ENCODE measurements at regions of chr4 and their contacts with region 1.

Region 1: DNA sequence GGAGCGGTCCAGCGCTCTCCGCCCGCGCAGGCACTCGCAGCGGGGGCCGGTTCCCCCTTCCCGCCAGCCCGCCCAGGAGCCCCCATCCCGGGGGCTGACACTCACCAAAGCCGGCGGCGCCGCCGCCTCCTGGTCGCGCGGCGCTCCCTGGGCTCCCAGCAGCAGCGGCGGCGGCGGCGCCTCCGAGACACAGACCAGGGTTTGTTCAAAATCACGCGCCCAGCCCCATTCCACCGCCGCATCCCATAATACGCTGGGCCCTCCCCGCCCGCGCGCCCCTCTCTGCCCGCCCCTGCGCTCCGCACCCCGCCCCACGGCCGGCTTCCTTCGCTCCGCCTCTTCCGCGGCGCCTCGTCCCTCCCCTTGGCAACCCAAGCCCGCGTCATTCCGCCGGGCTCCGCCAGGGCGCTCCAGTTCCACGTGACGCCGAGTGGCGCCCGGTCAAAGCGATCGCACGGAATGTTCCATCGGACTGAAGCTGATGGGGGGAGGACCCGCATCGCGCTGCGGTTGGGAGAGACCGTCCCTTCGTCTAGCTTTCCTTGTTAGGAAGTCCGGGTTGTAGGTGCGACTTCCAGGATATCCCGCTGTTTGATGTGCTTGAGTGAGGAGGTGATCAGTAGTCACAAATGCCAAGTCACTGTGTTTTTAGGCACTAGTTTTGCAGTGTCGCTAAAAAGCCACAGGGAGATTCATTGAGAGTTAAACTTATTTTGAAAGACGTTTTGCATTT is 2.2 kb upstream of the LIN54 start:
- DNase-seq: peak; percentile 93 to 99 (median 97)
- ATAC-seq: peak; percentile 94
- H3K4me3 ChIP-seq: peak overlapping the region; percentile 69
- H3K4me3 Mint-ChIP-seq: peak overlapping the region; percentile 89 to 98 (median 94)
- H3K27ac ChIP-seq: peak overlapping the region; percentile 73
- H3K27ac Mint-ChIP-seq: peak overlapping the region; percentile 84 to 98 (median 93)
- H3K4me1 ChIP-seq: peaks cover 15 to 22% of the 10 kb centered on the region in 2 donors
- H3K4me1 Mint-ChIP-seq: peaks cover 32 to 54% (median 46%) of the 10 kb centered on the region in 7 donors
- H3K27me3 ChIP-seq: no peaks in the 10 kb centered on the region
- H3K27me3 Mint-ChIP-seq: no peaks in the 10 kb centered on the region

Region 2: GRCh38 chr4:82428969-82429727 is 583.7 kb before region 1 on chr4:
- CTCF ChIA-PET with region 1: no interaction called
- POLR2A ChIA-PET with region 1: interaction called, 6 read pairs
- intact Hi-C with region 1: loop called (anchors 1 kb)
- DNase-seq: peak; percentile 90 to 99 (median 94)
- ATAC-seq: peak; percentile 79
- H3K4me3 ChIP-seq: peak overlapping the region; percentile 96
- H3K4me3 Mint-ChIP-seq: peak overlapping the region; percentile 98 to 100 (median 99)
- H3K27ac ChIP-seq: peak overlapping the region; percentile 99
- H3K27ac Mint-ChIP-seq: peak overlapping the region; percentile 98 to 100 (median 99)
- H3K4me1 ChIP-seq: peaks cover 28 to 39% of the 10 kb centered on the region in 2 donors
- H3K4me1 Mint-ChIP-seq: peaks cover 40 to 81% (median 69%) of the 10 kb centered on the region in 7 donors
- H3K27me3 ChIP-seq: no peaks in the 10 kb centered on the region
- H3K27me3 Mint-ChIP-seq: peaks cover 0 to 2% (median 0%) of the 10 kb centered on the region in 5 donors

Region 3: GRCh38 chr4:82890901-82891706 is 121.7 kb before region 1 on chr4 and contains the start of gene SEC31A:
- CTCF ChIA-PET with region 1: no interaction called
- POLR2A ChIA-PET with region 1: interaction called, 3 read pairs
- intact Hi-C with region 1: loop called (anchors 1 kb)
- DNase-seq: peak; percentile 89 to 98 (median 95)
- ATAC-seq: peak; percentile 97
- H3K4me3 ChIP-seq: peak within 1 kb of the TSS; percentile 96
- H3K4me3 Mint-ChIP-seq: peak within 1 kb of the TSS; percentile 86 to 96 (median 93)
- H3K27ac ChIP-seq: peak within 1 kb of the TSS; percentile 99
- H3K27ac Mint-ChIP-seq: peak within 1 kb of the TSS; percentile 92 to 99 (median 97)
- H3K4me1 ChIP-seq: peaks cover 11 to 12% of the 10 kb centered on the region in 2 donors
- H3K4me1 Mint-ChIP-seq: peaks cover 18 to 51% (median 41%) of the 10 kb centered on the region in 7 donors
- H3K27me3 ChIP-seq: no peaks in the 10 kb centered on the region
- H3K27me3 Mint-ChIP-seq: no peaks in the 10 kb centered on the region
- total RNA-seq, gene SEC31A: 137 to 168 (median 149) TPM

Region 4: DNA sequence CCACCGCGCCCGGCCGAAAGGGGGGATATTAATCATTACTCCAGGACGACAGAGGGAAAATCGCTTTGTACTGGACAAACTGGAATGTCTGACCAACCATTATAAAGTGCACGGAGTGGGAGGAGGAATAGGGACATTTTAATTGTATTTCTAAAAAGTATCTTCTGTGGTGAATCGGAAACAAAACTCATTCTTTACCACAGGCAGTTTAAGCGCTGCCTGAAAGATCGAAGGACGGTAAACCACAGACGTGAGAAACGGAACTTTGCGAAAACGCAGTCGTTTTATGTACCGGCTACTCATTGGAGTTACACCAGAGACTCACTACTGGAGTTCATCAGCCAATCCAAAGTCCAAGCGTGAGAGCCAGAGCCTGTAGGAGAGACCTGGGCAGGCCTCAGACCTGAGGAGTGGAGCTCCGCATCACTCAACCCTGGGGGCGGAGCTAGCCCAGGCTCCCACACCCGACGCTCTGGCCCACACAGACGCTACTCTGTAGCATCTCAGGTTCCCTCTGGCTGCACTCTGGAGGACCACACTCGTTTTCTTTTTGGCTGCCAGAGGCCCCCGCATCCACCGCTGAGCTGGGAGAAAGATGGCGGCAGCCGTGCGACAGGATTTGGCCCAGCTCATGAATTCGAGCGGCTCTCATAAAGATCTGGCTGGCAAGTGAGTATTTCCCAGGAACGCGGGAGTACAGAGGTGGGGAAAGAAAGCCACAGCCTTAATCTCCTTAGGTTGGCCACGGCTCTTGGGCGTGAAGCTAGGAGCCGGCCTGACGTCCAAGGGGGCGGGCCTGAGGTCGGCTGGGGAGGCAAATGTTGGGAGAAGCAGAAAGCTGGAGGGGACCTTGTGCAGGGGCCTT is 22.0 kb after region 1 on chr4 and contains the start of gene COPS4:
- CTCF ChIA-PET with region 1: interaction called, 11 read pairs
- POLR2A ChIA-PET with region 1: interaction called, 59 read pairs
- intact Hi-C with region 1: loop called (anchors 1 kb)
- DNase-seq: peak; percentile 77 to 98 (median 97)
- ATAC-seq: peak; percentile 99
- H3K4me3 ChIP-seq: peak within 1 kb of the TSS; percentile 98
- H3K4me3 Mint-ChIP-seq: peak within 1 kb of the TSS; percentile 92 to 100 (median 98)
- H3K27ac ChIP-seq: peak within 1 kb of the TSS; percentile 94
- H3K27ac Mint-ChIP-seq: peak within 1 kb of the TSS; percentile 94 to 100 (median 97)
- H3K4me1 ChIP-seq: peaks cover 4 to 19% of the 10 kb centered on the region in 2 donors
- H3K4me1 Mint-ChIP-seq: peaks cover 19 to 44% (median 35%) of the 10 kb centered on the region in 7 donors
- H3K27me3 ChIP-seq: no peaks in the 10 kb centered on the region
- H3K27me3 Mint-ChIP-seq: no peaks in the 10 kb centered on the region
- total RNA-seq, gene COPS4: 23.5 to 32.8 (median 24.7) TPM

Region 5: DNA sequence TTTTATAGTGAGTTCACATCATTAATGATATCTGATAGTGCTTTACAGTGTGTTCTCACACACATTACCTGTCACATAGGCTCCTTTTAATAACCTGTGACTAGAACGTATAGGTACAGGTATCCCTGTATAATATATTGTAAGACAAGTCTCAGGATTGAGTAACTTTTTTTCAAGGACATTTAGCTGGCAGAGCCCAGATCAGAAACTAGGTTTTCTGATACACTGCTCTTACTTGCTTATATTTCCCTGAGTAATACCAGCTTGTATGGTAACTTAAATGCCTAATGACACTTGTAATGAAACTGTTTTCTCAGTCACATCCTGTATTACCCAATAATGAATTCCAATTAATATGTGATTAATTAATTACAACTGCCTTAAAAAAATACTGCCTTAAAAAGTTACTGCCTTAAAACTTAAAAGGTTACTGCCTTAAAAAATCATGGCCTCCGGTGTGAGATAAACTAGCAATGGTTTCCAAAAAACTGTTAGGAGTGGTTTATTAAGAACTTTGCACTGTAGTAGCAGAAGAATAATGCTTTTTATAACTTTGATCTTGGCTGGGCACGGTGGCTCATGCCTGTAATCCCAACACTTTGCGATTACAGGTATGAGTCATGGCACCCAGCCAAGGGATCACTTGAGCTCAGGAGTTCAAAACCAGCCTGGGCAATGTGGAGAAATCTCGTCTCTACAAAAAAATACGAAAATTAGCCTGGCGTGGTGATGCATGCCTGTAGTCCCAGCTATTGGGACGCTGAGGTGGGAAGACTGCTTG is 34.0 kb after region 1 on chr4:
- CTCF ChIA-PET with region 1: no interaction called
- POLR2A ChIA-PET with region 1: no interaction called
- intact Hi-C with region 1: no loop called
- DNase-seq: no peak
- ATAC-seq: no peak
- H3K4me3 ChIP-seq: no peak overlapping the region
- H3K4me3 Mint-ChIP-seq: no peak overlapping the region
- H3K27ac ChIP-seq: no peak overlapping the region
- H3K27ac Mint-ChIP-seq: no peak overlapping the region
- H3K4me1 ChIP-seq: peaks cover 4 to 5% of the 10 kb centered on the region in 2 donors
- H3K4me1 Mint-ChIP-seq: peaks cover 4 to 23% (median 18%) of the 10 kb centered on the region in 7 donors
- H3K27me3 ChIP-seq: no peaks in the 10 kb centered on the region
- H3K27me3 Mint-ChIP-seq: no peaks in the 10 kb centered on the region

Region 6: GRCh38 chr4:83217721-83218522 is 205.1 kb after region 1 on chr4:
- CTCF ChIA-PET with region 1: no interaction called
- POLR2A ChIA-PET with region 1: interaction called, 8 read pairs
- intact Hi-C with region 1: loop called in 1 of 2 experiments (anchors 1 kb)
- DNase-seq: peak in 8 of 9 donors; percentile 52 to 91 (median 84)
- ATAC-seq: peak; percentile 95
- H3K4me3 ChIP-seq: peak overlapping the region; percentile 23
- H3K4me3 Mint-ChIP-seq: peak overlapping the region; percentile 57 to 84 (median 72)
- H3K27ac ChIP-seq: peak overlapping the region; percentile 78
- H3K27ac Mint-ChIP-seq: peak overlapping the region; percentile 88 to 96 (median 92)
- H3K4me1 ChIP-seq: peaks cover 65 to 77% of the 10 kb centered on the region in 2 donors
- H3K4me1 Mint-ChIP-seq: peaks cover 56 to 83% (median 74%) of the 10 kb centered on the region in 7 donors
- H3K27me3 ChIP-seq: no peaks in the 10 kb centered on the region
- H3K27me3 Mint-ChIP-seq: no peaks in the 10 kb centered on the region

Region 7: DNA sequence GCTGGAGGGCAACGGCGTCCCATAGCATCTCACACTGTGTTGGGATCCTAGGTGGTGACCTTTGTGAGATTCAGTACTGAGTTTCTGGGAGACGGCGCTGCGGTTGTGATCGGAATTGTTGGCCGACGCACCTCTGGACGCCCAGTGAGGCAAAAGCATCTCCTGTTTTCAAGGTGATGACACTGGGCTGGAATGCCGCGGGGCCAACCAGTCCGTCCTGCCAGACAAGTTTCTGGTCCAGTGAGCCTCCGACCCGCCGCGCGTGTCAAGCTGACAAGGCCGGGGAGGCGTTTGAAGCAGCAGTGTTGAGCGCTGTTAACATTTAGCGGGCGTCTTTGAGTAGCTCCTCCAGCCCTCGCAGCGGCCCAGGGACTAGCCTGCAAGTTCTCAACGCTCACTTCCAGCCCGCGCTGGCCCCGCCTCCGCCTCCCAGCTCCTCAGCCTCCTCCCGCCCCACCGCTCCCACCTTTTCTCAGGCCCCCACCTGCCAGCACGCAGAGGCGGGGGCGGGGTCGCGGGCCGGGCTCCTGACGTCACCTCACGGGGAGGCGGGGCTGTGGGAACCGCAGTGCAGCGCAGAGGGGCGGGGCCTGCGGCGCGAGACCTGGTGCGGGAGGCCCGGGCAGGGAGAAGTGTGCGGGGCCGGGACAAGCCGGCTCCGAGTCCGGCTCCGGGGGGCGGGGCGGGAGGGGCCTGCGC is 1569.6 kb after region 1 on chr4:
- CTCF ChIA-PET with region 1: no interaction called
- POLR2A ChIA-PET with region 1: no interaction called
- intact Hi-C with region 1: loop called in 1 of 2 experiments (anchors 2 kb)
- DNase-seq: peak; percentile 88 to 96 (median 91)
- ATAC-seq: peak; percentile 93
- H3K4me3 ChIP-seq: peak overlapping the region; percentile 61
- H3K4me3 Mint-ChIP-seq: peak overlapping the region; percentile 67 to 90 (median 85)
- H3K27ac ChIP-seq: peak overlapping the region; percentile 62
- H3K27ac Mint-ChIP-seq: peak overlapping the region in 6 of 9 donors; percentile 38 to 83 (median 50)
- H3K4me1 ChIP-seq: peaks cover 5% of the 10 kb centered on the region in 2 donors
- H3K4me1 Mint-ChIP-seq: peaks cover 9 to 26% (median 17%) of the 10 kb centered on the region in 7 donors
- H3K27me3 ChIP-seq: no peaks in the 10 kb centered on the region
- H3K27me3 Mint-ChIP-seq: peaks cover 18 to 61% (median 36%) of the 10 kb centered on the region in 5 donors

Measured in naive thymus-derived CD4-positive, alpha-beta T cell (primary cell).